ENCODE measurements at regions of chr15 and their contacts with region 1.

Region 1: DNA sequence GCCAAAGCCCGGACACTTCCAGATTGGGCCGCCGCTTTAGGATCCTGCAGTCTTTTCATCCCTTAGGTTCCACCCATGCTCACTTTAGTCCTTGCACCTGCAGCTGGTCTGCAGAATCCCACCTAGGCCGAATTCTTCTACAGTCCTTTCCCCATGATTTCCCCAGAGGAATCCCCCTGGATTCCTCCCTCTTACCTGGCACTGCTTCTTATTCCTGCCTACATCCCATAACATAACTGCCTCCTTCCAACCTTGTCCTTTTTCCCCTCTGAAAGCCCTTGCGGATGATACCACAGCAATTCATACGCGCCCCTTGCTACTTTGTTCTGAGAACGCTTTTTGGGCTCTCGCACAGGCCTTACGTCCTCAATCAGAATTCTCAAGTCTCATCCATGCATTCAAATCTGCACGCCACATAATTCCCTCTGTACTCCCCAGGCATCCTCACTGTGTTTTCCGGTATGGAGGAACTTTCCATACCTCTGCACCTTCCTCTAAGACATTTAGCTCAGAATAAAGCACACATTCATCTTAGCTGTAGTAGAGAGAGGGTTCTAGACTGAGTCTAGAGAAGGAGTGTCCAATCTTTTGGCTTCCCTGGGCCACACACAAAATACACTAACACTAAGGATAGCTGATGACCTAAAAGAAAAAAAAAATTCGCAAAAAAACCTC is 619 bp downstream of the EIF2AK4 start:
- DNase-seq: no peak
- CTCF ChIP-seq: no peak

Region 2: GRCh38 chr15:39946862-39947261 is 12.3 kb after region 1 on chr15:
- CTCF ChIA-PET with region 1: interaction called, 12 read pairs
- POLR2A ChIA-PET with region 1: interaction called, 4 read pairs
- DNase-seq: no peak
- CTCF ChIP-seq: no peak

Measured in GM10248 (cell line).